ENCODE measurements at regions of chr7 and their contacts with region 1.

Region 1: GRCh38 chr7:12610899-12611298 is 40.4 kb downstream of the SCIN start:
- DNase-seq: no peak
- H3K4me3 ChIP-seq: no peak overlapping the region
- H3K27ac ChIP-seq: no peak overlapping the region
- H3K4me1 ChIP-seq: no peaks in the 10 kb centered on the region
- H3K27me3 ChIP-seq: no peaks in the 10 kb centered on the region

Region 2: GRCh38 chr7:12578930-12579640 is 31.8 kb before region 1 on chr7:
- CTCF ChIA-PET with region 1: no interaction called
- POLR2A ChIA-PET with region 1: no interaction called
- DNase-seq: no peak
- H3K4me3 ChIP-seq: no peak overlapping the region
- H3K27ac ChIP-seq: no peak overlapping the region
- H3K4me1 ChIP-seq: no peaks in the 10 kb centered on the region
- H3K27me3 ChIP-seq: no peaks in the 10 kb centered on the region

Region 3: DNA sequence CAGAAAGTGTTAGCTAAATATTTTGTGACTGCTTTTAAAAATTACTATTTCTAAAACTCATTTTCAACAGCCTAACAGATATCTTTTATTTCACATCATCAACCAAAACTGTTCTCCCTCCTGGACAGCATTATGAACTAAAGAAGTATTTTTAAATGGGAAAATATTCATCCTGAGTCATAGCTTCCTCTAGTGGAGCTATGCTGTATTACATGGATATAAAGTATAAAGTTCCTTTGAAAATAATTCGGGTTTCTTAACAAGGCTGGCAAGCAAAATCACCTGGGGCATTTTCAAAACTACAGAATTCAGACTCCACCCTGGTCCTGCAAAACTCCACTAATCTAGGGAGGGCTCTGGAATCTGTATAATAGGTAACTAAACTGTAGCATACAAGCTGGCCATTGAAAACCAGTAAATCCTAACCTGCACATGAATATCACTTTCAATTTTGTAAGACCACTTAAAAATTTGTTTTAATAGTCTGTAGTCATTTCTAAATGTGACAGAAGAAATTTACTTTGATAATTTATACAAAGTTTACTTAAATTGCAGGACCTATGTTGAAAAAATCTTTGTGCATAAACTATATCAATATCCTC is 13.1 kb after region 1 on chr7:
- CTCF ChIA-PET with region 1: interaction called, 15 read pairs
- POLR2A ChIA-PET with region 1: interaction called, 3 read pairs
- DNase-seq: peak in 1 of 3 donors; percentile 7
- H3K4me3 ChIP-seq: no peak overlapping the region
- H3K27ac ChIP-seq: no peak overlapping the region
- H3K4me1 ChIP-seq: peaks cover 0 to 7% (median 0%) of the 10 kb centered on the region in 4 experiments
- H3K27me3 ChIP-seq: no peaks in the 10 kb centered on the region